ENCODE measurements at regions of chrX and their contacts with region 1.

Region 1: GRCh38 chrX:41705680-41706374 is 17.1 kb downstream of the GPR34 start:
- DNase-seq: peak; percentile 76
- H3K4me3 ChIP-seq: peak overlapping the region; percentile 38
- H3K27ac ChIP-seq: peak overlapping the region; percentile 86
- H3K4me1 ChIP-seq: peaks cover 50% of the 10 kb centered on the region
- CTCF ChIP-seq: no peak

Region 2: DNA sequence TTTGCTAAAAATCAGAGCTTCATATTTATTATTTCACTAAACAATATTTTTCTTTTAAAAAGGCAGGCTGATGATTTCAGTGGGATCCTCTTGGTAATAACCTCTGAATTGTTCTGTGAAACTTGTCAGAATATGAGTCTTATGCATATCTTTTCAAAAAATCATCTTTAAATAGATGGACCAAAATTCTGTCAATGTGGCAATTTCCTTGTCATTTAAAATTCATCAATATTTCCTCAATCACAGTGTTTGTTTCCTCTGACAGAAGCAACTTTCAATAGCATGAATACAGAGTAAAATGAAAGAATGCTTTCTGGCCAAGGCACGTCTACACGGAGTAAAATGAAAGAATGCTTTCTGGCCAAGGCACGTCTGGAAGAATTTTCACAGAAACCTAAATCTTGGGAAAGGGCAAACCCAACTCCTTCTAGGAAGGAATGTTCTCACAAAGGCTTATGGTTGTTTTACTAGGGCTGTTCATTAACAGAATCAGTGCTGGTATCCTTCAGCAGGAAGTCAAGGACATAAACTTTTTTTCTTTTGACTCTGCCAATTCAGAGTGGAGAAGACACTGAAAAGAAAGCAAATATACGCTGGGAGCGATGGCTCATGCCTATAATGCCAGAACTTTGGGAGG is 116.1 kb before region 1 on chrX:
- CTCF ChIA-PET with region 1: no interaction called
- POLR2A ChIA-PET with region 1: no interaction called
- intact Hi-C with region 1: loop called (anchors 5 kb)
- DNase-seq: no peak
- H3K4me3 ChIP-seq: no peak overlapping the region
- H3K27ac ChIP-seq: no peak overlapping the region
- H3K4me1 ChIP-seq: no peaks in the 10 kb centered on the region
- CTCF ChIP-seq: no peak

Measured in OCI-LY7 (cell line).